Ovary (tissue), 10 donors: ENCODE measurements at regions of chr7 and their contacts with region 1.

Region 1: GRCh38 chr7:25886387-25887240 is 265.4 kb upstream of the NFE2L3 start:
- DNase-seq: no peak
- H3K4me3 ChIP-seq: no peak overlapping the region
- H3K27ac ChIP-seq: no peak overlapping the region
- H3K4me1 ChIP-seq: no peaks in the 10 kb centered on the region
- H3K27me3 ChIP-seq: no peaks in the 10 kb centered on the region
- CTCF ChIP-seq: no peak
- EP300 ChIP-seq: no peak
- POLR2A ChIP-seq: no peak

Region 2: GRCh38 chr7:26061688-26062150 is 175.1 kb after region 1 on chr7:
- intact Hi-C with region 1: loop called in 2 of 4 experiments (anchors 5 to 10 kb)
- DNase-seq: peak; percentile 38 to 72 (median 63)
- H3K4me3 ChIP-seq: no peak overlapping the region
- H3K27ac ChIP-seq: no peak overlapping the region
- H3K4me1 ChIP-seq: no peaks in the 10 kb centered on the region
- H3K27me3 ChIP-seq: no peaks in the 10 kb centered on the region
- CTCF ChIP-seq: peak; percentile 21 to 52 (median 36)
- EP300 ChIP-seq: no peak
- POLR2A ChIP-seq: no peak

Region 3: GRCh38 chr7:26843705-26844104 is 957.1 kb after region 1 on chr7:
- intact Hi-C with region 1: loop called in 1 of 4 experiments (anchors 10 kb)
- DNase-seq: no peak
- H3K4me3 ChIP-seq: no peak overlapping the region
- H3K27ac ChIP-seq: no peak overlapping the region
- H3K4me1 ChIP-seq: no peaks in the 10 kb centered on the region
- H3K27me3 ChIP-seq: no peaks in the 10 kb centered on the region
- CTCF ChIP-seq: no peak
- EP300 ChIP-seq: no peak
- POLR2A ChIP-seq: no peak

Region 4: GRCh38 chr7:27160546-27161213 is 1274.1 kb after region 1 on chr7:
- intact Hi-C with region 1: loop called in 3 of 4 experiments (anchors 5 to 10 kb)
- DNase-seq: peak; percentile 71 to 89 (median 87)
- H3K4me3 ChIP-seq: peak overlapping the region; percentile 43
- H3K27ac ChIP-seq: no peak overlapping the region
- H3K4me1 ChIP-seq: peaks cover 4% of the 10 kb centered on the region
- H3K27me3 ChIP-seq: peaks cover 9% of the 10 kb centered on the region
- CTCF ChIP-seq: peak; percentile 96 to 98 (median 97)
- EP300 ChIP-seq: no peak
- POLR2A ChIP-seq: no peak